ENCODE measurements at regions of chr7 and their contacts with region 1.

Region 1: GRCh38 chr7:148962823-148963582 is 65.3 kb downstream of the PDIA4 start:
- DNase-seq: peak; percentile 73
- H3K4me3 ChIP-seq: peak overlapping the region; percentile 23 to 62 (median 47)
- H3K27ac ChIP-seq: peak overlapping the region; percentile 66 to 76 (median 72)
- H3K4me1 ChIP-seq: peaks cover 3 to 23% (median 15%) of the 10 kb centered on the region in 4 donors
- H3K27me3 ChIP-seq: no peaks in the 10 kb centered on the region
- CTCF ChIP-seq: peak; percentile 54 to 64 (median 56)
- EP300 ChIP-seq: no peak
- POLR2A ChIP-seq: no peak

Region 2: DNA sequence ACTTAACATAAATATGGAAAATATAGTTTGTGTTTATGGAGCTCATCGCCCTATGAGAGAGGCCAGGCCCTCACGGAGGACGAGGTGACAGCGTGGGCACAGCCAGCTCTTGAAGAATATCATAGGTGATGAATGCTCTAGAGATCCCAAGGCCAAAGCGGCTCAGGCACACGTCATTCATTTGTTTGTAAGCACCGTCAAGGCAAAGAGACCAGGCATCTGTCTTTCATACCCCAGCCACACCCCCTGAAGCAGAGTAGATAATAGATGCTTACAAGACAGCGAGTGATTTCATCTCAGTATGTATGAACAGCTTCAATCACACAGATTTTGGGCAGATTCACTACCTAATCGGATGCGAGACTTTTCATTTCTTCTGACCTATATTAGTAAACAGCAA is 614.5 kb before region 1 on chr7:
- in situ Hi-C with region 1: no loop called
- intact Hi-C with region 1: no loop called
- DNase-seq: no peak
- H3K4me3 ChIP-seq: no peak overlapping the region
- H3K27ac ChIP-seq: no peak overlapping the region
- H3K4me1 ChIP-seq: no peaks in the 10 kb centered on the region
- H3K27me3 ChIP-seq: no peaks in the 10 kb centered on the region
- CTCF ChIP-seq: no peak
- EP300 ChIP-seq: no peak
- POLR2A ChIP-seq: no peak

Region 3: GRCh38 chr7:148480479-148481146 is 482.4 kb before region 1 on chr7:
- in situ Hi-C with region 1: no loop called
- intact Hi-C with region 1: no loop called
- DNase-seq: no peak
- H3K4me3 ChIP-seq: no peak overlapping the region
- H3K27ac ChIP-seq: no peak overlapping the region
- H3K4me1 ChIP-seq: peaks cover 11 to 22% (median 13%) of the 10 kb centered on the region in 4 donors
- H3K27me3 ChIP-seq: no peaks in the 10 kb centered on the region
- CTCF ChIP-seq: no peak
- EP300 ChIP-seq: no peak
- POLR2A ChIP-seq: no peak

Region 4: GRCh38 chr7:148503875-148504487 is 459.0 kb before region 1 on chr7:
- in situ Hi-C with region 1: loop called (anchors 5 to 10 kb)
- intact Hi-C with region 1: loop called (anchors 5 kb)
- DNase-seq: no peak
- H3K4me3 ChIP-seq: no peak overlapping the region
- H3K27ac ChIP-seq: no peak overlapping the region
- H3K4me1 ChIP-seq: peaks cover 0 to 9% (median 0%) of the 10 kb centered on the region in 4 donors
- H3K27me3 ChIP-seq: peaks cover 18% of the 10 kb centered on the region
- CTCF ChIP-seq: peak; percentile 68 to 82 (median 73)
- EP300 ChIP-seq: no peak
- POLR2A ChIP-seq: no peak

Region 5: GRCh38 chr7:148575640-148576411 is 387.2 kb before region 1 on chr7:
- in situ Hi-C with region 1: loop called in 3 of 4 experiments (anchors 10 kb)
- intact Hi-C with region 1: no loop called
- DNase-seq: peak; percentile 68
- H3K4me3 ChIP-seq: no peak overlapping the region
- H3K27ac ChIP-seq: no peak overlapping the region
- H3K4me1 ChIP-seq: no peaks in the 10 kb centered on the region
- H3K27me3 ChIP-seq: no peaks in the 10 kb centered on the region
- CTCF ChIP-seq: peak; percentile 68 to 83 (median 73)
- EP300 ChIP-seq: no peak
- POLR2A ChIP-seq: no peak

Region 6: GRCh38 chr7:148867596-148868377 is 95.2 kb before region 1 on chr7:
- in situ Hi-C with region 1: loop called in 2 of 4 experiments (anchors 10 to 25 kb)
- intact Hi-C with region 1: no loop called
- DNase-seq: no peak
- H3K4me3 ChIP-seq: no peak overlapping the region
- H3K27ac ChIP-seq: no peak overlapping the region
- H3K4me1 ChIP-seq: no peaks in the 10 kb centered on the region
- H3K27me3 ChIP-seq: no peaks in the 10 kb centered on the region
- CTCF ChIP-seq: no peak
- EP300 ChIP-seq: no peak
- POLR2A ChIP-seq: no peak

Region 7: GRCh38 chr7:149005241-149006050 is 42.4 kb after region 1 on chr7:
- in situ Hi-C with region 1: no loop called
- intact Hi-C with region 1: no loop called
- DNase-seq: peak; percentile 83
- H3K4me3 ChIP-seq: no peak overlapping the region
- H3K27ac ChIP-seq: no peak overlapping the region
- H3K4me1 ChIP-seq: no peaks in the 10 kb centered on the region
- H3K27me3 ChIP-seq: no peaks in the 10 kb centered on the region
- CTCF ChIP-seq: peak; percentile 85 to 90 (median 88)
- EP300 ChIP-seq: no peak
- POLR2A ChIP-seq: no peak

Measured in transverse colon (tissue), 4 donors.